IMR-90 (cell line): ENCODE measurements at regions of chr10 and their contacts with region 1.

Region 1: DNA sequence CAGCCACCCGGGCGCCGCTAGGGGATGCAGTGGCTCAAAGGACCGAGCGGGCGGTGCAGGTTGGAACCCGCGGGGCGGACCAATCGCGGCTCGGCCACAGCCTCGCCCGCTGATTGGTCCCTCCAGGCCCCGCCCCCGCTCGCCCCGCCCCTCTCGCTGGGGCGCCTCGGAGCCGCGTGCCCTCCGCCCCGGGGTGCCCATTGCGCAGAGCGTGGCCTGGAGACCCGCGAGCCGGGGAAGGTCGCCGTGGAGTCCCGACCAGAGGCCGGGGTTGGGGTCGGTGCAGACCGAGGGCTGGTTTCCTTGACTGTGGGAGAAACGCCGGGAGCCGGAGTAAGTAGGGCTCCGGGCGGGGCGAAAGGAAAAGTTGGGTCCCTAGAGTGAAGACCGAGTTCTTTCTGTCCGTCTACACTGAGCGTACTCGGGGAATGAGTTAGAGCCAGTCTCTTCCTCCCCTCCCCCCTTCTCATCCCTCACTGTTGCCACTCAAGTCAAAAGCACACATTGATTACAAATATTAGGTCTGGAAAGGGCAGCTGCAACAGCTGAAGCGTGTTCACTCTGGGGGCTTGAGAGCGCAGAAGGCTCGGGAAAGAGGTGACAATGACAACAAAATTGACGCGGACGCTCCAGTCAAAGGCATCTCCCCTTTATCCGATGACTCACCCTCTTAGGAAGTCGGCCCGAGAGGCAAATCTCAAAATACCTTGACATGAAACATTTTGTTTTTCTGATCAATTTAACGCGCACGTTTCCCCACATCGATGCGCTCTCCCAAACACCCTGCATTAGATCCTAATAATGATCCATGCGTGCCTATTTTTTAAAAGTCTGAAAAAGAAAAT is 820 bp upstream of the GATA3 start:
- DNase-seq: peak; percentile 70
- ATAC-seq: peak; percentile 94
- H3K4me3 ChIP-seq: peak overlapping the region; percentile 52
- H3K27ac ChIP-seq: no peak overlapping the region
- H3K4me1 ChIP-seq: no peaks in the 10 kb centered on the region; the same call in 1 of the 2 replicates
- H3K27me3 ChIP-seq: peaks cover 84% of the 10 kb centered on the region
- CTCF ChIP-seq: peak; percentile 79
- POLR2A ChIP-seq: no peak
- RAD21 ChIP-seq: peak; percentile 74

Region 2: GRCh38 chr10:7872041-7872442 is 181.6 kb before region 1 on chr10:
- CTCF ChIA-PET with region 1: no interaction called
- POLR2A ChIA-PET with region 1: no interaction called
- dilution Hi-C with region 1: no loop called
- in situ Hi-C with region 1: no loop called
- intact Hi-C with region 1: loop called (anchors 5 kb)
- DNase-seq: peak; percentile 11
- ATAC-seq: no peak
- H3K4me3 ChIP-seq: 0 out of 2 replicates have a peak overlapping the region, but pooled peaks have one; percentile 34
- H3K27ac ChIP-seq: no peak overlapping the region
- H3K4me1 ChIP-seq: no peaks in the 10 kb centered on the region
- H3K27me3 ChIP-seq: no peaks in the 10 kb centered on the region
- CTCF ChIP-seq: peak; percentile 86
- POLR2A ChIP-seq: no peak
- RAD21 ChIP-seq: peak; percentile 85

Region 3: GRCh38 chr10:7887174-7887816 is 166.4 kb before region 1 on chr10:
- CTCF ChIA-PET with region 1: no interaction called
- POLR2A ChIA-PET with region 1: no interaction called
- dilution Hi-C with region 1: no loop called
- in situ Hi-C with region 1: no loop called
- intact Hi-C with region 1: loop called (anchors 5 kb)
- DNase-seq: peak; percentile 82
- ATAC-seq: peak; percentile 86
- H3K4me3 ChIP-seq: no peak overlapping the region
- H3K27ac ChIP-seq: no peak overlapping the region
- H3K4me1 ChIP-seq: peaks cover 3% of the 10 kb centered on the region; the same call in 1 of the 2 replicates
- H3K27me3 ChIP-seq: no peaks in the 10 kb centered on the region
- CTCF ChIP-seq: no peak
- POLR2A ChIP-seq: no peak
- RAD21 ChIP-seq: no peak

Region 4: DNA sequence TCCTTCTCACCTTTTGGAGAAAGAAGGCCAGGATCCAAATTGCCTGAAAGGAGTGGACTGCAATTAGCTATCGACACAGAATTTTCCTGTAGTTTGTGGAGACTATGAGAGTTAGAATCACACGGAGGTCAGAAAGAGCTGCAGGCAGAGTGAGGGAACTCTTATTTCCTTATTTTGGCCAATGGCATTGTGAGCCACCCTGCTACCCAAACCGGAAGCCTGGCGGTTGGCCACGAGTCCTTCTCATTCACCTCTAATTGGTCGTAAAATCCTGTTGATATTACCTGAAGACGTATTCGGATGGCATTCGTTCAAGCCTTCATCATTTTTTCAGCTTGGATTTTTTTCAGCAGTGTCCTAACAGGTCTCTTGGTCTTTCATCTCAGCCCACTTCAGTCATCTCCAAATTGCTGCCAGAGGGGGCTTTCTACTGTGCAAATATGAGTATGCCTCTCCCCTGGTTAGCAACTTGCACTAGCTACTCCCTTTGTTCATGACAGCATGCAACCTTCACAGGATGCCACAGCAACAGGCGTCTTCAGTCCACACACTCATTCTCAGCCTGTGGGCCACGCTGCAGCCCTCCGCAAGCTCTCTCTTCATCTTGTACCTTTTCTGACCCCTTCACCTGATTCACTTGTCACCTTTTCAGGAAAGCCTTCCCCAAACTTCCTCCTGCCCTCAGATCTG is 67.7 kb after region 1 on chr10:
- CTCF ChIA-PET with region 1: no interaction called
- POLR2A ChIA-PET with region 1: no interaction called
- dilution Hi-C with region 1: no loop called
- in situ Hi-C with region 1: no loop called
- intact Hi-C with region 1: no loop called
- DNase-seq: no peak
- ATAC-seq: no peak
- H3K4me3 ChIP-seq: no peak overlapping the region
- H3K27ac ChIP-seq: no peak overlapping the region
- H3K4me1 ChIP-seq: no peaks in the 10 kb centered on the region
- H3K27me3 ChIP-seq: no peaks in the 10 kb centered on the region
- CTCF ChIP-seq: no peak
- POLR2A ChIP-seq: no peak
- RAD21 ChIP-seq: no peak

Region 5: DNA sequence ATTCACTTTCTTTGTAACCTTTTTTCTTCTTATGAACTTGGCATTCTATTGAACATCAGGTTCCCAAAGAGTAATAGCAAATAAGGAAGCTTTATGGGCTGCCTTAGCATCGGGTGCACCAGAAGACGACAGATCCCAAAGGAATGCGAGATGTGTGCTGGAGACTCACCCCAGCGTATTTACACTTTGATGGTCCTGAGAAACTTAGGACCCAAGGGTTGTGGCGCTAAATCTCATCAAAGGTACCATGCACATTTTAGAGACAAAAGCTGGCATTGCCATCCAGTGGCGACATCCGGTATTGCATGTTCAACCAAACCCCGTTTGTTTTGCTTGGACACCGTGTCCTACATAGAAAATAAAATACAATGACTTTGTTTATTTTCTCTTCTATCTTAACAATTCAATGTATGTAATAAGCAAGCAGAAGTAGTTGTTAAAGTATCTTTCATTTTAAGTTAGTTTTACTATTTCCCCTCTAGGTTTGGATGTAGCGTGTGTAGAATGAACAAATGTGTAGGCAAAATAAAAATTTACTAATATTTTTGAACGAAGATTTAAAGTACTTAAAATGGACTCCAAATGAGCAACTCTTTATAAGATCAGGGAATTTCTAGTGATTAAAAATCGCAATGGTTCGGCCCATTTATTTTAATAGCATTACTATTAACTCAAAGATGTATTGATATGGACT is 1155.6 kb after region 1 on chr10:
- CTCF ChIA-PET with region 1: no interaction called
- POLR2A ChIA-PET with region 1: no interaction called
- dilution Hi-C with region 1: no loop called
- in situ Hi-C with region 1: no loop called
- intact Hi-C with region 1: loop called (anchors 2 kb)
- DNase-seq: peak; percentile 60
- ATAC-seq: peak; percentile 84
- H3K4me3 ChIP-seq: no peak overlapping the region
- H3K27ac ChIP-seq: no peak overlapping the region
- H3K4me1 ChIP-seq: no peaks in the 10 kb centered on the region
- H3K27me3 ChIP-seq: no peaks in the 10 kb centered on the region
- CTCF ChIP-seq: peak; percentile 84
- POLR2A ChIP-seq: no peak
- RAD21 ChIP-seq: peak; percentile 82